ENCODE measurements at regions of chr20 and their contacts with region 1.

Region 1: DNA sequence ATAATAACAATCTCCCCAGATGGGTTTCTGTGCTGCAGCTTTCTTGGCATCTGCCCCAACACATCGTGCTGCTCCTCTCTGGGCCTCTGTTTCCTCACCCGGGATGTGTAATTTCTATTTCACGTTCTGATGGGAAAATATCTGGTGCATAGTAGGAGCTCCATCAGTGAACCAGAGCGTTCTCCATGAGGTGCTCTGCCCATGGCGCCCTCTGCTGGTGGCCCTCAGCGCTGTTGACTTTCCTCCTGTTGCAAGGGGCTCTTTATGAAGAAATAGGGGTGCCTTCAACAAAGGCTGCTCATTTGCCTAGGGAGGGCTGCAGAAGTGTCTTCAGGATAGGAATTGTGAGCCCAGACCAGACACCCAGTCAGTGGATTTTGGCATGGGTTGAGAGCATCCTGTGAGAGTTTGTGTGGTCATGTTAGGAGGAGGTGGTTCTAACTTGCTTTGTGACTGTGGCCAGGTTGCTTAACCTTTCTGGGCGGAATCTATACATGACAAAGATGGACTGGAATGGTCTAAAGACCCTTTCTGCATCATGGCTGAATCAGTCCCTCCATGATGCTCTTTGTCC is 8.1 kb downstream of the SCRT2 start:
- DNase-seq: no peak
- ATAC-seq: peak; percentile 88
- H3K4me3 ChIP-seq: no peak overlapping the region
- H3K27ac ChIP-seq: no peak overlapping the region
- H3K4me1 ChIP-seq: no peaks in the 10 kb centered on the region
- H3K27me3 ChIP-seq: peaks cover 3 to 6% of the 10 kb centered on the region in 2 experiments; a peak in 3 of 4 replicates
- CTCF ChIP-seq: peak; percentile 82 to 92 (median 88)
- EP300 ChIP-seq: no peak
- POLR2A ChIP-seq: no peak
- RAD21 ChIP-seq: peak; percentile 58

Region 2: DNA sequence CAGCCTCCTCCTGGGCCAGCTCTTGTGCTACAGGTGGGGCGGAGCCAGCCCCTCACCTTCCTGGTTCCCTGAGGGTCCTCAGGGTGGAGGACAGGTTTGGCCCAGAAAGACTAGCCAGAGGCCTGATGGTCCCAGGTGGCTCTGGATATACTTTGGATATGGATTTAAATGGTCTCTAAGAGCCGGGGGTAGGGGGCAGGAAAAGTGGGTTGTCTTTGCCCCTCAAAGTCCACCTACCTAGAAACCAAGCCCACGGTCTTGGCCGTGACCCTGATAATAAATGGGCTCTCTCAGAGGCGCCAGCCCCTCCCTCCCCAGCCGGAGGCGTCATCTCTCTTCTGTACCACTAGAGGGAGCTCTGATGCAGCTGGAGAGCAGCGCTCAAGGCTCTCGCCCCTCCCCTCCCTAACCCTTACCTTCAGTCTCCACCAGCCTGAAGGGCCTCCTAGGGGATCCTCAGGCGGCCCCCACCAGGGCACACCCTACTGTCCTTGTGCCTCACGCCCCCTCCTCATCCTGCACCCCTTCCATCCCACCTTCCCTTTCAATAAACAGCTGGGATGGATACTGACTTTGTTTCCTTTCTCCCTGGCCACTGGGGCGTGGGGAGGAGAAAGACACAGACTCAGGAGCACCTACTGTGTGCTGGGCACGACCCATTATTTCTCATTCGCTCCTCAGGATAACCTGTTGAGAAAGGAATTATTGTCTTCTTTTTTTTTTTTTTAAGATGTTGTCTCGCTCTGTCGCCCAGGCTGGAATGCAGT is 313.0 kb before region 1 on chr20:
- CTCF ChIA-PET with region 1: interaction called, 7 read pairs
- POLR2A ChIA-PET with region 1: no interaction called
- RAD21 ChIA-PET with region 1: interaction called, 4 read pairs
- SMC1A ChIA-PET with region 1: no interaction called
- in situ Hi-C with region 1: no loop called
- intact Hi-C with region 1: loop called (anchors 5 kb)
- DNase-seq: no peak
- ATAC-seq: peak; percentile 100
- H3K4me3 ChIP-seq: no peak overlapping the region
- H3K27ac ChIP-seq: no peak overlapping the region
- H3K4me1 ChIP-seq: no peaks in the 10 kb centered on the region
- H3K27me3 ChIP-seq: no peaks in the 10 kb centered on the region
- CTCF ChIP-seq: peak; percentile 92 to 98 (median 94)
- EP300 ChIP-seq: no peak
- POLR2A ChIP-seq: no peak
- RAD21 ChIP-seq: peak; percentile 95

Region 3: GRCh38 chr20:588932-589672 is 78.4 kb before region 1 on chr20:
- CTCF ChIA-PET with region 1: interaction called, 15 read pairs
- POLR2A ChIA-PET with region 1: no interaction called
- RAD21 ChIA-PET with region 1: interaction called, 5 read pairs
- SMC1A ChIA-PET with region 1: interaction called, 4 read pairs
- in situ Hi-C with region 1: no loop called
- intact Hi-C with region 1: no loop called
- DNase-seq: peak; percentile 66
- ATAC-seq: peak; percentile 96
- H3K4me3 ChIP-seq: no peak overlapping the region
- H3K27ac ChIP-seq: no peak overlapping the region
- H3K4me1 ChIP-seq: peaks cover 15% of the 10 kb centered on the region
- H3K27me3 ChIP-seq: no peaks in the 10 kb centered on the region
- CTCF ChIP-seq: peak; percentile 18 to 61 (median 22); a peak in 4 of 6 replicates
- EP300 ChIP-seq: peak in 1 of 2 experiments; percentile 34; a peak in 1 of 4 replicates
- POLR2A ChIP-seq: no peak
- RAD21 ChIP-seq: peak; percentile 53; the same call in 1 of the 2 replicates

Region 4: GRCh38 chr20:677957-678356 is 10.5 kb after region 1 on chr20:
- CTCF ChIA-PET with region 1: interaction called, 10 read pairs
- POLR2A ChIA-PET with region 1: no interaction called
- RAD21 ChIA-PET with region 1: interaction called, 4 read pairs
- SMC1A ChIA-PET with region 1: no interaction called
- in situ Hi-C with region 1: no loop called
- intact Hi-C with region 1: no loop called
- DNase-seq: no peak
- ATAC-seq: peak; percentile 75
- H3K4me3 ChIP-seq: no peak overlapping the region
- H3K27ac ChIP-seq: no peak overlapping the region
- H3K4me1 ChIP-seq: peaks cover 4% of the 10 kb centered on the region; the same call in 1 of the 2 replicates
- H3K27me3 ChIP-seq: peaks cover 3 to 9% of the 10 kb centered on the region in 2 experiments
- CTCF ChIP-seq: no peak
- EP300 ChIP-seq: no peak
- POLR2A ChIP-seq: no peak
- RAD21 ChIP-seq: no peak

Region 5: DNA sequence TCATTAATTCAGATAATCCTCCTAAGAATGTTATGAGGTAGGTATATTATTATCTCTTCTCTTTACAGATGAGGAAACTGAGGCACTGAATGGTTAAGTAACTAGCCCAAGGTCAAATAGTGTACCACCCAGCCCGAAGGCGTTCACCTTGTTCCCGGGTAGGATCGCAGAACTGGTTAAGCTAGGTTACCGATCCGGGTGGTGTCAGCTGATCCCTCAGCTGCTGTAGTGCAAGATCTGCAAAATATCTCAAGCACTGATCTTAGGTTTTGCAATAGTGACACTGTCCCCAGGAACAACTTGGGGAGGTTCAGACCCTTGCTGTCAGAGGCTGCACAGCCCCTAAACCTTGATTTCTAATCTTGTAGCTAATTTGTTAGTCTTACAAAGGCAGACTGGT is 72.7 kb after region 1 on chr20:
- CTCF ChIA-PET with region 1: interaction called, 11 read pairs
- POLR2A ChIA-PET with region 1: no interaction called
- RAD21 ChIA-PET with region 1: interaction called, 4 read pairs
- SMC1A ChIA-PET with region 1: interaction called, 3 read pairs
- in situ Hi-C with region 1: no loop called
- intact Hi-C with region 1: no loop called
- DNase-seq: no peak
- ATAC-seq: no peak
- H3K4me3 ChIP-seq: no peak overlapping the region
- H3K27ac ChIP-seq: no peak overlapping the region
- H3K4me1 ChIP-seq: no peaks in the 10 kb centered on the region
- H3K27me3 ChIP-seq: peaks cover 0 to 2% of the 10 kb centered on the region in 2 experiments; a peak in 1 of 4 replicates
- CTCF ChIP-seq: no peak
- EP300 ChIP-seq: no peak
- POLR2A ChIP-seq: no peak
- RAD21 ChIP-seq: no peak

Region 6: GRCh38 chr20:815226-815625 is 147.7 kb after region 1 on chr20:
- CTCF ChIA-PET with region 1: no interaction called
- POLR2A ChIA-PET with region 1: no interaction called
- RAD21 ChIA-PET with region 1: no interaction called
- SMC1A ChIA-PET with region 1: no interaction called
- in situ Hi-C with region 1: no loop called
- intact Hi-C with region 1: no loop called
- DNase-seq: no peak
- ATAC-seq: no peak
- H3K4me3 ChIP-seq: no peak overlapping the region
- H3K27ac ChIP-seq: no peak overlapping the region
- H3K4me1 ChIP-seq: no peaks in the 10 kb centered on the region
- H3K27me3 ChIP-seq: no peaks in the 10 kb centered on the region
- CTCF ChIP-seq: no peak
- EP300 ChIP-seq: no peak
- POLR2A ChIP-seq: no peak
- RAD21 ChIP-seq: no peak